ENCODE measurements at regions of chr6 and their contacts with region 1.

Region 1: GRCh38 chr6:4018172-4018905 is 60.6 kb downstream of the FAM217A start:
- H3K4me3 ChIP-seq: peak overlapping the region; percentile 93
- H3K27ac ChIP-seq: peak overlapping the region; percentile 100
- H3K4me1 ChIP-seq: peaks cover 5% of the 10 kb centered on the region; the same call in 1 of the 2 replicates
- CTCF ChIP-seq: peak; percentile 94

Region 2: DNA sequence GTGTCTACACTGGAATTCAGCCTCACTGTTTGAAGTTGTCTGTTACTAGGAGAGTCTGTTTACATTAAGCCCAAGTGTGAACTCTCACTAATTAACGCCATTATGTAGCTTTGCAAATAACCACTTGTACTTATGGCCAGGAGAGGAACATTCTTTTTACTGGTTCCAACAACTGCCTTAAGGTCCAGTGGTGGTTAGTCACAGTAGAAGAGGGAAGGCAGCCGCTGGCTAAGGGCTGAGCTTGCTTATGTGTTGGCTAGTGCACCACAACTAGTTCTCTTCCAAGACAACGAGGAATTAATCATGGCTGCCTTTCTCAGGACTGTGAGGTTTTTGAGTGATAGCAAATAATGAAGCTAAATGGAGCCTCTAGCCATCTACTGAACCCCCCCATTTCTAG is 546.6 kb before region 1 on chr6:
- CTCF ChIA-PET with region 1: no interaction called
- POLR2A ChIA-PET with region 1: no interaction called
- H3K4me3 ChIP-seq: no peak overlapping the region
- H3K27ac ChIP-seq: no peak overlapping the region
- H3K4me1 ChIP-seq: 0 out of 2 replicates have a peak, but pooled peaks cover 5% of the 10 kb centered on the region
- CTCF ChIP-seq: no peak

Region 3: GRCh38 chr6:3697609-3698008 is 320.7 kb before region 1 on chr6:
- CTCF ChIA-PET with region 1: no interaction called
- POLR2A ChIA-PET with region 1: no interaction called
- H3K4me3 ChIP-seq: no peak overlapping the region
- H3K27ac ChIP-seq: no peak overlapping the region
- H3K4me1 ChIP-seq: no peaks in the 10 kb centered on the region
- CTCF ChIP-seq: no peak

Region 4: DNA sequence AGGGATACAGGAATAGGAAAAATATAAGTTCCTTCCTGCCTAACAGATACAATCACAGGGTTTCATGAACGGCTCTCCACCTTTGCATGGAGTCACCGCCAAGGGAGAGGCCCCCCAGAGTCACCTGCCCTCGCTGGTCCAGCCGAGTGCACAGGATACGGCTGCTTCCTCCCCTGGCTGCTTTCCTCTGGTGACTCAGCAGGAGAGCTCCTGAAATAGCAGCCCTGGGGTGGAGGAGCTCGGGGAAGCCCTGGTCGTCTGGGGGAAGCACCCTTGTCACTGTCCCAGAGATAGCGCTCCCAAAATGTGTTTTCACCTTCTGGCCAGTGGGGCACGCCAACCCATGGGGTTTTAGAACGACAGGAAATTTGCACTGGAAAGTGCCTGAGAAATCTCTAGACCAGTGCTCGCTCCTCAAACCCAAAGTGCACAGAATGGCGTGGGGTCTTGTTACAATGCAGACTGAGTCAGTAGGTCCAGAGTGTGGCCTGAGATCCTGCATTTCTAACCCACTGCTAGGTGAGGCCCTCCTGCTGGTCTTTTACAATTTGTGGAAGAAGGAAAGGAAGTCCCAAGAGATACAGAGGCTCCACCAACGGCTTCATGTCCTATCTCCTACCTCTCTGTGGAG is 205.1 kb before region 1 on chr6:
- CTCF ChIA-PET with region 1: no interaction called
- POLR2A ChIA-PET with region 1: no interaction called
- H3K4me3 ChIP-seq: no peak overlapping the region
- H3K27ac ChIP-seq: no peak overlapping the region
- H3K4me1 ChIP-seq: peaks cover 4% of the 10 kb centered on the region; the same call in 1 of the 2 replicates
- CTCF ChIP-seq: no peak

Region 5: GRCh38 chr6:3997177-3997770 is 21.1 kb before region 1 on chr6:
- CTCF ChIA-PET with region 1: interaction called, 4 read pairs
- POLR2A ChIA-PET with region 1: interaction called, 10 read pairs
- H3K4me3 ChIP-seq: no peak overlapping the region
- H3K27ac ChIP-seq: no peak overlapping the region
- H3K4me1 ChIP-seq: peaks cover 11% of the 10 kb centered on the region
- CTCF ChIP-seq: no peak

Region 6: DNA sequence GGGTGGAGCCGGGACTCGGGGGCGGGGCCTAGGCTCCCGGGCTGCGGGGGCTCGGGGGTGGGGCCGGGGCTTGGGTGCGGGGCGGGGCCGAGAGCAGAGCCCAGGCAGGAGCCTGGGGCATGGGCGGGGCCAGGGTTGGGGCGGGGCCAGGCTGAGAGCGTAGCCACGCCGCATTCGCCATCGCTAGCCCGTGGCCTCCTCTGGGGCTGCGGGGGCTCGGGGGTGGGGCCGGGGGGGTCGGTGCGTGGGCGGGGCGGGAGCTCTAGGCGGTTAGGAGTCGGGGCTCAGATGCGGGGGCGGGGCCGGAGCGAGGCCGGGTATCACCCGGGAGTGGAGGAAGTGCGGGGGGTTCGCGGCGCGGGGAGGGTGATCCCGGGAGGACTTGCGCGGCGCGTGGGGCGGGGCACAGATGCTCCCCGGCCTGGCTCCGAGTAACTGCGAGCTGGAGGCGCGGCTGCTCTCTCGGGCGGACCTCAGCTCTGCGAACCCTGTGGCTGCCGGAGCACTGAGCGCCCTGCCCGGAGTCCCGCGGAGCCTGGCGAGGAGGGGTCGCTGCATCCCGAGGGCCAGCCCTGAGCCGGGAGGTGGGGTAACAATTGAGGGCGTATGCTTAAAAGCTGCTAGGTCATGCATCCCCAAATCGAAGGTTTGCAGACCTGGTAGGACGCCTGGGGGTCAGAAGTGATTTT is 117.5 kb after region 1 on chr6:
- CTCF ChIA-PET with region 1: no interaction called
- POLR2A ChIA-PET with region 1: interaction called, 38 read pairs
- H3K4me3 ChIP-seq: peak overlapping the region; percentile 64
- H3K27ac ChIP-seq: peak overlapping the region; percentile 55; the same call in 1 of the 2 replicates
- H3K4me1 ChIP-seq: peaks cover 5% of the 10 kb centered on the region
- CTCF ChIP-seq: peak; percentile 62

Measured in HEK293 (cell line).